ENCODE measurements at regions of chr2 and their contacts with region 1.

Region 1: DNA sequence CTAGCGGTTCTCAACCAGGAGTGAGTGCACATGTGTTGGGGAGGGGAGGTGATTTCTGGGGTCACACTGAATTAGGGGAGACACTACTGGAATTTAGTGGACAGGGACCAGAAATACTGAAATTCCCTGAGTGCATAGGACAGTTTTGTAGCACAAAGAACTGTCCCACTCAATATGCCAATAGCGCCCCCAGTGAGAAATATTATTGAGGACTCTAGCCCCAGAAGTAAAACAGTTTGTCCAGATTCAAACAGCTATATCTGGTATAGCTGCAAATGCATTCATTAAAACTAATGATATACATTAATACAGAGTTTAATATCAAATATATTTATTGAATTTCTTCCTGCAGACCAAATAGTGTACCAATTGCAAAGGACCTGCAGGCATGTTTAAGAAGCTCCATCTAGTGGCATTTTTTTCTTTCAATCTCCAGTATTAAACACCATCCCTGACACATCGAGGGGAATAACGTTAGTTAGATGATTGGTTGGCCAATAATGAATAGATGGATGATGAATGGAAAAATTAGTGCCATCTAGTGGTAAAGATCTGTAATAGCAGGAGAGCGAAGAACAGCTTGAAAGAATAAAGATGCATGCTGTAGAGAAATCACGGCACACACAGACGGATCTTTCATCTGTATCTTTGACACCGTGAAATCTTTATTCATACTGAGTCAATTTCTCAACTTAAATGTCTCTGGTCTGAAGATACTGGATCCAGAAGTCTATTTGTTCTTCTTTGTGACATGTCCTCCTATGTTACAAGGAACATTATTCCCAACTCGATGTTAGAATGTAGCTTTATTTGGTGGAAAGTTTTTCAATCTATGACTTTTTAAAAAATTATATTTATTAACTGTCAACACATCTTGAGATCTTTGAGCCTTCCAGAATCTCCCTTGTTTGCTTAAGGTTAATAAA is 62.5 kb downstream of the DHRS9 start:
- DNase-seq: peak; percentile 60
- CTCF ChIP-seq: peak; percentile 78

Region 2: GRCh38 chr2:168649105-168649504 is 482.7 kb before region 1 on chr2:
- CTCF ChIA-PET with region 1: no interaction called
- POLR2A ChIA-PET with region 1: no interaction called
- DNase-seq: no peak
- CTCF ChIP-seq: no peak

Region 3: GRCh38 chr2:168971261-168971660 is 160.6 kb before region 1 on chr2:
- CTCF ChIA-PET with region 1: interaction called, 12 read pairs
- POLR2A ChIA-PET with region 1: no interaction called
- DNase-seq: no peak
- CTCF ChIP-seq: no peak

Region 4: GRCh38 chr2:169119126-169119770 is 12.6 kb before region 1 on chr2:
- CTCF ChIA-PET with region 1: interaction called, 25 read pairs
- POLR2A ChIA-PET with region 1: no interaction called
- DNase-seq: no peak
- CTCF ChIP-seq: no peak

Region 5: GRCh38 chr2:169165791-169166190 is 33.9 kb after region 1 on chr2:
- CTCF ChIA-PET with region 1: no interaction called
- POLR2A ChIA-PET with region 1: no interaction called
- DNase-seq: no peak
- CTCF ChIP-seq: no peak

Region 6: DNA sequence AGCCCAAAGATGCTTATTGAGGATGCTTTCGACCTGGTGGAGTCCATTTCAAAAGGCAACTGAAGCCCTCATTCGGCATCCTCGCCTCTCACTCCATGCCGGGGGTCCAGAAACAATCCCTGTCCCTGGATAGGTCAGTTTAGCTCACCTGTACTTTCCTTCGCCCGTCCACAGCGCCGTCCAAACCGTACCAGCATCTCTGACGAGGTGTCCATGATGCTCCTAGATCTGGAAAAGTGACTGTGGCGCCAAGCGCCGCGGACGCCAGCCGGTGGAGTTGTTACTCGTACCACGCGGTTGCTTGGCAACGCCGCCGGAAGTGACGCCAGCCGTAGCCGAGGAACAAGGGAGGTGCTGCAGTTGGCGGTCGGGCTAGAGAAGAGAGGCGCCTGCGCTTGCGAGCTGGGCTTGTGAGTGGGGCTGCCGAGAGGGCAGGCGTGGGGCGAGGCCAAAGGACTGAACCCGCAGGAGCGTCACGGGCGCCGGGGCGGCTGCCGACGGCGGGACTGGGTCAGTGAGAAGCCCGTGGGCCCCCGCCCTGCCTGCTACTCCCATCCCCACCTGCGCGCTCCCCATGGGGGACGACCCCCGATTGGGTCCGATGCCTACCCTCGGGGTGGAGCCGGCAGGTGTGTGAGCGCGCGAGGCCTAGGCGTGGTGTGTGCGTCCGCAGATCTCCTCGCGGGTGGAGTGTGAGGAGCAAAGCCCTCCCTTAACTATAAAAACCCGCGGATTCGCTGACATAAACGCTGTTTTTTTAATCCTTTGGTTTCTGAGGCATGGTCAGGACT is 562.5 kb after region 1 on chr2 and contains the starts of genes CFAP210 and PHOSPHO2:
- CTCF ChIA-PET with region 1: no interaction called
- POLR2A ChIA-PET with region 1: no interaction called
- DNase-seq: peak; percentile 97
- CTCF ChIP-seq: no peak

Measured in GM10248 (cell line).